ENCODE measurements at regions of chr13 and their contacts with region 1.

Region 1: DNA sequence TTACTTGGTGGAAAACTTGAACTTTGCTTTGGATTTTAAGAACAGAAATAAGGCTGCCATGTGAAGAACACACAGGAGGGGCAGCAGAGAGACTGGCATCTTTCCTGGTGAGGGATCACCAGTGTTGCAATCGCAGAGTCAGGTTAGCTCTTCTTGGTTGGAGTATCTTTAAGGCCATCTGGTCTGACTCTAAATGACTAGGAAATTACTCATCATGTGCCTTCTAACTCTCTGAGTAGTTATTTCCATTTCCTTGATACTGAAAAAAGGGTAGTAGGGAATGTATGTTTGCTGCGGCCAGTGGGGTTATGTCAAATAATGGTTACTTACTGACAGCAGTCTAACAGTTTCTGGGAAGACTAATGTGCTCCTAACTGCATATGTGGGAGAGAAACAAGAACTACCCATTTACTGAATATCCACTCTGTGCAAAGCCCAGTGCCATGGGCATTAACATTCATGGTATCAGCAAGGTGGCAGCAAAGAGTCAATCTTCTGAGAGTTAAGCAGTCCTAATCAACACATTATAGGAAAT is 122.1 kb downstream of the COG6 start:
- DNase-seq: peak; percentile 72
- H3K4me3 Mint-ChIP-seq: peak overlapping the region; percentile 4
- H3K27ac Mint-ChIP-seq: peak overlapping the region; percentile 92
- H3K4me1 Mint-ChIP-seq: peaks cover 52% of the 10 kb centered on the region
- H3K27me3 Mint-ChIP-seq: no peaks in the 10 kb centered on the region

Region 2: GRCh38 chr13:39684531-39685137 is 93.0 kb before region 1 on chr13:
- CTCF ChIA-PET with region 1: interaction called, 4 read pairs
- POLR2A ChIA-PET with region 1: no interaction called
- intact Hi-C with region 1: loop called (anchors 1 kb)
- DNase-seq: no peak
- H3K4me3 Mint-ChIP-seq: no peak overlapping the region
- H3K27ac Mint-ChIP-seq: no peak overlapping the region
- H3K4me1 Mint-ChIP-seq: peaks cover 20% of the 10 kb centered on the region
- H3K27me3 Mint-ChIP-seq: no peaks in the 10 kb centered on the region

Region 3: GRCh38 chr13:39804332-39805210 is 27.0 kb after region 1 on chr13:
- CTCF ChIA-PET with region 1: no interaction called
- POLR2A ChIA-PET with region 1: interaction called, 3 read pairs
- intact Hi-C with region 1: loop called (anchors 1 kb)
- DNase-seq: no peak
- H3K4me3 Mint-ChIP-seq: no peak overlapping the region
- H3K27ac Mint-ChIP-seq: peak overlapping the region; percentile 23
- H3K4me1 Mint-ChIP-seq: peaks cover 13% of the 10 kb centered on the region
- H3K27me3 Mint-ChIP-seq: no peaks in the 10 kb centered on the region

Region 4: DNA sequence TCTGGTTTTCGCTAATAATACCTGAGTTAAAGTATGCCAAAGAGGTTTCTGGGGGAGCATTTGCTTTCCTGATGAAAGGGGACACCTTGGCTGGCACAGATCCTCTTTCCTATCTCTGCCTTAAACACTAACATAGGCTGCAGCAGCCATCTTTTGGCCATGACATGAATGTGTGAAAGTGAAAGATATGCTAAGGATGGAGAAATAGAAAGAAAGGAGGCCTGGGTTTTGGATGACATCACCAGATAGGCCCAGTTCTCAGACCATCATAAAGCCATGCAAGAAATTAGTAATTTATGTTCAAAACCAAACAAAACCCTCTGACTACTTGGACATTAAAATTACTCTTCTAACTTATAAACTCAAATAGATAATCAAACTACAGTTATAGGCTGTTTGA is 157.6 kb after region 1 on chr13:
- CTCF ChIA-PET with region 1: interaction called, 3 read pairs
- POLR2A ChIA-PET with region 1: no interaction called
- intact Hi-C with region 1: loop called (anchors 2 kb)
- DNase-seq: no peak
- H3K4me3 Mint-ChIP-seq: no peak overlapping the region
- H3K27ac Mint-ChIP-seq: no peak overlapping the region
- H3K4me1 Mint-ChIP-seq: peaks cover 17% of the 10 kb centered on the region
- H3K27me3 Mint-ChIP-seq: no peaks in the 10 kb centered on the region

Region 5: DNA sequence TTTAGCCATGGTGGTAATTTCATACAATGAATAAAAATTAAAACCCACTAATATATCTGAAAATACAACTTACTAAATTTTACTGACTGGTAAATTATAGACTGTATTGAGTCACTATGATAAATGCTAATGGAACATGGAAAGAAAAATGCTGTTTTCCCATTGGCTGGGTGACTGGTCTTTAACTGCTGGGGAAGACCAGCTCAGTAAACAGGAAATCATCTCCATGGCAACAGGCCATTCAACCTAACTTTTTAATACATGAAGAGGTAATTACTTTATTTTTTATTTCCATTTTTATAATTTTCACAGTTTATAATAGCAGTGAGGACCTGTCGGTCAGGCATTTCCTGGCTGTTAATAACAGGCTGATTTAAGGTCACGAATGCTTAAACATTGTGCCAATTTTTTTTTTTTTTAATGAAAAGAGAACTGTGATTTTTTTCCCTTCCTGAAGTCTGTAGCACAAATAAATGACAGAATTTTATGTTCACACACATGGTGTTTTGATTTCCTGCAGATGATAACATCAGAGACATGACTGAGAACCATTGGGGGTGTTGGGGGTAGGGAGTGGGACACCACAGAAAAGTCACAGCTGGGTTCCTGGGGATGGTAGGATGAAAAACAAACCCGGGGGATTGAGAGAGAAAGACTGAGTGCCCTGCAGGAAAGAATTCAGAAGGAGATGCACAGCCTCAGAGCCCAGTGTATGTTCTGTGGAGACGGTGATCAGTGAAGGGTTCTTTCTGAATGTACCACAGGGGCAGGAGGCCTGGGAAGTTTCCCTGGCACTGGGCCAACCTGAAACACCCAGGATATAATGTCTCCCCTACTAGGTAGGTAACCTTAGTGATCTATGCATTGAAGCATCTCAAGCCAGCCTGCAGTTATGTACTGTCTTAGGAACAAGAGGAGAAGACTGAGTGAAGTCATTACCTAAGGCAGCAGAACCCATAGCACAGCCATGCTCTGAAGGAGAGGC is 174.9 kb after region 1 on chr13:
- CTCF ChIA-PET with region 1: no interaction called
- POLR2A ChIA-PET with region 1: interaction called, 3 read pairs
- intact Hi-C with region 1: loop called (anchors 5 kb)
- DNase-seq: no peak
- H3K4me3 Mint-ChIP-seq: no peak overlapping the region
- H3K27ac Mint-ChIP-seq: no peak overlapping the region
- H3K4me1 Mint-ChIP-seq: peaks cover 44% of the 10 kb centered on the region
- H3K27me3 Mint-ChIP-seq: no peaks in the 10 kb centered on the region

Region 6: GRCh38 chr13:40306817-40307216 is 529.2 kb after region 1 on chr13:
- CTCF ChIA-PET with region 1: no interaction called
- POLR2A ChIA-PET with region 1: no interaction called
- intact Hi-C with region 1: loop called (anchors 5 kb)
- DNase-seq: peak; percentile 85
- H3K4me3 Mint-ChIP-seq: peak overlapping the region; percentile 32
- H3K27ac Mint-ChIP-seq: peak overlapping the region; percentile 70
- H3K4me1 Mint-ChIP-seq: peaks cover 24% of the 10 kb centered on the region
- H3K27me3 Mint-ChIP-seq: no peaks in the 10 kb centered on the region

Region 7: GRCh38 chr13:40613192-40613818 is 835.7 kb after region 1 on chr13:
- CTCF ChIA-PET with region 1: no interaction called
- POLR2A ChIA-PET with region 1: no interaction called
- intact Hi-C with region 1: loop called (anchors 5 kb)
- DNase-seq: peak; percentile 77
- H3K4me3 Mint-ChIP-seq: peak overlapping the region; percentile 74
- H3K27ac Mint-ChIP-seq: peak overlapping the region; percentile 97
- H3K4me1 Mint-ChIP-seq: peaks cover 92% of the 10 kb centered on the region
- H3K27me3 Mint-ChIP-seq: no peaks in the 10 kb centered on the region

Measured in activated CD4-positive, alpha-beta memory T cell treated with anti-CD3 and anti-CD28 coated beads for 36 hours (primary cell).